Activated naive CD8-positive, alpha-beta T cell treated with anti-CD3 and anti-CD28 coated beads, Interleukin-2, amount 10 ng/mL, durations not matched to agents 7 days and 5 days (primary cell): ENCODE measurements at regions of chr20 and their contacts with region 1.

Region 1: DNA sequence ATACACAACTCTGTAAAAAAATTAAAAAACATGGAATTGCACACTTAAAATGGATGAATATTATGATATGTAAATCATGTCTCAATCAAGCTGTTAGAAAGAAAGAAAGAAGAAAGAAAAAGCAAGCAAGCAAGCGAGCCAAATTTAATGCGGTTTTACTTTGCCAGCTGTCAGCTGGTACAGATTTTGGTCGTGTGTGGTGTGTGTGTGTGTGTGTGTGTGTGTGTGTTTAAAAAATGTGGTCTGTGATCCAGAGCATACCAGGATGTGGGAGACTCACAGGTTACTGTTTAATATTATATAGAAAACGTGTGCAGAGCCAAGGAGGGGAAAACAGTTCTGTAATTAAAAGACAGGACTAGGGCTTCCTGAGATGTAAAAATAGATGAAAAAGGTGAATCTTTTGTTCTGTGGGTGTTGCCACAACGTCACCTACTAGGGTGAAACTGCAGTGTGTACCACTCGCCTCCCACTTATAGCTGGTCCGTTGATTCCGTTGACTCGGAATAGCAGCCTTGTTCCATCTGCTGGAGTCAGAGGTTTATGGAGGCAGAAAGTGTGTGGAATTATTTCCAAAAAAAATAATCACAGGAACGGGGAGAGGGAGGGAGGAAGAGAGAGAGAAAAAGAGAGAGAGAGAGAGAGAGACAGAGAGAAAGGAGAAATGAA is 197.7 kb downstream of the BCAS1 start:
- DNase-seq: no peak
- ATAC-seq: peak; percentile 54
- H3K4me3 Mint-ChIP-seq: peak overlapping the region; percentile 88
- H3K27ac Mint-ChIP-seq: peak overlapping the region; percentile 96
- H3K4me1 Mint-ChIP-seq: peaks cover 47% of the 10 kb centered on the region
- H3K27me3 Mint-ChIP-seq: no peaks in the 10 kb centered on the region

Region 2: DNA sequence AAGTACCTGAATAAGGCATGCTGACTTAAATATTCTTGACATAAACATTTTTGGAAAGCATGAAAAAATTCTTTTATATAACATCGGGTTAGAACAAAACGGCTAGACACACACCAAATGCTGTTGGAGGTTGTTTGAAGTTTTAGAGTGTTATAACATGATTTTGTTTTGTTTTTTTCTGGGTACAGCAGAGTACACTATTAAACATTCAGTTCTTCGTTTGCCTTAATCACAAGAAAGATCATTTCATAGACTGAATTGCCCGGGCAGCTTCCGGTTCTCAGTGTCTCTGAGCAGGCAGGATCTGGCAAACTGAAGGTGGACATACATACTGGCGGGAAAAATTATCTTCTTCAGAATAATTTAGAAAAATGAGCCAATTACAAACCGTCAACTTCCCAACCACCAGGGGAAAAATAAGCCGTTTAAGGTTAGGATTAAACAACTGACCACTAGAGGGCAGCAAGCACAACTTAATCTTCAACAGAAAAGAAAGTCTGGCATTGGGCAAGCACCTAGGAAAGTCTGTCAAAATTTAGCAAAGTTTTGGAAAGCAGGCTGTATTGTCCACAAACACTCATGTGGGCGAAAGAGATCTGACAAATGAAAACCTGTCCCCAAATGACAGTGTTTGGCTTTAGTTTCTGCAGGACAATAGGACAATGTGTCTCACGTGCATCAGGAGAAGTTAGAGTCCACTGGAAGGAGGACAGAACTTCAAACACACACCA is 294.0 kb before region 1 on chr20:
- POLR2A ChIA-PET with region 1: interaction called, 10 read pairs
- DNase-seq: no peak
- ATAC-seq: peak; percentile 21
- H3K4me3 Mint-ChIP-seq: peak overlapping the region; percentile 96
- H3K27ac Mint-ChIP-seq: peak overlapping the region; percentile 92
- H3K4me1 Mint-ChIP-seq: peaks cover 71% of the 10 kb centered on the region
- H3K27me3 Mint-ChIP-seq: no peaks in the 10 kb centered on the region

Region 3: DNA sequence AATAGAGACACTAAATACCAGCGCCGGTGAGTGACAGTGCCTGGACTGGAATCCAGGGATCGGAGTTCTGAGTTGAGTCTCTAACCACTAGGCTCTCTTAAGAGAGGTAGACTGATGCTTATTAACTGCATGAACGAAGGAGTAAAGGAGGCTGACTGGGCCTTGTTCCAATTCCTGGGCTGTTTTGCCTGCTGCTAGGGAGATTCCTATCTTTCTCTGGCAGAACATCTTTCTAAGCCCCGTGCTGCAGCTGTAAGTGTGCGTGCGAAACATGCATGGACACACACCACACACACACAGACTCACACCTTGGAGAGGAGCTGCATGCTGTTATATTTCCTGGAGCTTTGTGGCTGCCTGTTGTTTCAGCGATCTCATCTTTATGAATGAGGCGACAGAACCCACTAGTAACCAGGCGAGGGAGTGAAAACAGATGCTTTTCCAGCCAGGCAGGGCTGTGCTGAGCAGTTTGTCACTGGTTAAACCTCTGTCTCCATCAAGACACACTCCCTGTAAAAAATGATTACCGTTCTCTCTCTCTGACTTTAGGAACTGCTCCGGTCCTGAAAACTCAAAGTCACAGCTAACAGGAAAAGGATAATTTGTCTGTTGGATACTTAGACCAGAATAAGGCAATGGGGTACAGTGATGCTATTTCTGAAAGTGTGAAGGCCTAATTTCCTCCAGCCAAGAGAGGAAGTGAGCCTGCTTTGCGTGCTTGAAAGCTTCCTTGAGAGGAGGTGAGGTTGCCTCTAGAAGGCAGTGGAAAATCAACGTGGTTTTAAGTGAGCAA is 121.7 kb before region 1 on chr20:
- POLR2A ChIA-PET with region 1: interaction called, 20 read pairs
- DNase-seq: peak; percentile 58
- ATAC-seq: peak; percentile 66
- H3K4me3 Mint-ChIP-seq: peak overlapping the region; percentile 68
- H3K27ac Mint-ChIP-seq: peak overlapping the region; percentile 97
- H3K4me1 Mint-ChIP-seq: peaks cover 61% of the 10 kb centered on the region
- H3K27me3 Mint-ChIP-seq: no peaks in the 10 kb centered on the region

Region 4: DNA sequence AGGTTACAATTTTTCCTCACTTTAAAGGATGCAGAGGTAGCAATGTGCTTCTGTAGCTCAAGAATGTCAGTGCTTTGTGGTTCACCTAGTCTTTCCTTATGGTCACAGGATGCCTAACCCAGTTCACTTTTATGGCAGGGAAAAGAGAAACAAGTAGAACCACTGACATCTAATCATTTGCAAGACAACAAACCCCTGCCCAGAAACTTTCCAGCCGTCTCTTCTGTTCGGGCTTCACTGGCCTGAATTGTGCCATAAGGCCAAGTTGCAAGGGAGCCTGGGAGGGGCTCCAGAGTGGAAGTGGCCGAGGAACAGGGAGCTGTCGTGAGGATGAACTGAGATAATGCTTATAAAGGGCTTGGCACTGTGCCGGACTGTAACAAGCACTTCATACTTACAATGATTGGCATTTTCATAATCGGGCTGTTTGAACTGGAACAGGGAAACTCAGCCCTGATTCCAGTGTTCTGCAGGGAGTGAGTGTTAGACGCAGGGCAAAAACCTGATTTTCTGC is 14.9 kb before region 1 on chr20:
- POLR2A ChIA-PET with region 1: no interaction called
- DNase-seq: no peak
- ATAC-seq: peak; percentile 65
- H3K4me3 Mint-ChIP-seq: peak overlapping the region; percentile 60
- H3K27ac Mint-ChIP-seq: peak overlapping the region; percentile 71
- H3K4me1 Mint-ChIP-seq: peaks cover 31% of the 10 kb centered on the region
- H3K27me3 Mint-ChIP-seq: no peaks in the 10 kb centered on the region

Region 5: DNA sequence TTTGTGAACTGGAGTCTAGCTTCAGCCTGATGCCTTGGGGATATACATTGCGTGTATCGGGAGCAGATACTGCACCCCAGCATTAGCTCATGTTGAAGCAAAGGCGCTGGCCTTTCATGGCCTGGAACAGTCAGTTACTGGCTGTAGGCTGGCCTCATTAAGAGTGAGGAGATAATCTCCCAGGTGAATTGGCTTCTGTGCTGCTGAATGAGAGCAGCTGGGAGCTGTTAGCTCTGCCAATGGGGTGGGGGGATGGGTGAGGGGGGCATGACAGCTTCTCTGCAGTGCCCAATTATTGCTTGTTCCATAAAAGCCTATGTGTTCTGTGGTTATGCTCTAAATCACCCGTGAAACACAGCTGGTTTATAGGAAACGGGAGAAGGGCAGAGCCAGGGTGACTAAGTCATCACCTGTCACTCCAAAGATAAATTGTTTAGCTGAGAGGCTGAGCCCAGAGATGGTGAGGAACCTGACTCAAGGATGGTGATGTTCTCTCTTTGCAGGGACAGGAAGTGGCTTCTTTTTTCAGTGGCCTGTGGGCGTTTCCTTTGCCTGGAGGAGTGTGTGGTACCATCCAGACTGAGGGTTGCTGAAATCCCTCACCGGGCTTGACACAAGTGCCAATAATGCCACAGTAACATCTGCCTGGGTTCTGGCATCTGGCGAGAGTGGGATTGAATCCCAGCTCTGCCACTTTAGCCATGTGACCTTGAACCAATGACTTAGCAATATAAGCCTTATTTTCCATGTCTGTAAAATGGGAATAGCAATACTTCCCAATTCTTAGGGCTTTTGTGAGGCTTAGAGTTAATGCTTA is 26.9 kb after region 1 on chr20:
- POLR2A ChIA-PET with region 1: interaction called, 11 read pairs
- DNase-seq: peak; percentile 61
- ATAC-seq: peak; percentile 93
- H3K4me3 Mint-ChIP-seq: peak overlapping the region; percentile 58
- H3K27ac Mint-ChIP-seq: peak overlapping the region; percentile 94
- H3K4me1 Mint-ChIP-seq: peaks cover 52% of the 10 kb centered on the region
- H3K27me3 Mint-ChIP-seq: no peaks in the 10 kb centered on the region

Region 6: DNA sequence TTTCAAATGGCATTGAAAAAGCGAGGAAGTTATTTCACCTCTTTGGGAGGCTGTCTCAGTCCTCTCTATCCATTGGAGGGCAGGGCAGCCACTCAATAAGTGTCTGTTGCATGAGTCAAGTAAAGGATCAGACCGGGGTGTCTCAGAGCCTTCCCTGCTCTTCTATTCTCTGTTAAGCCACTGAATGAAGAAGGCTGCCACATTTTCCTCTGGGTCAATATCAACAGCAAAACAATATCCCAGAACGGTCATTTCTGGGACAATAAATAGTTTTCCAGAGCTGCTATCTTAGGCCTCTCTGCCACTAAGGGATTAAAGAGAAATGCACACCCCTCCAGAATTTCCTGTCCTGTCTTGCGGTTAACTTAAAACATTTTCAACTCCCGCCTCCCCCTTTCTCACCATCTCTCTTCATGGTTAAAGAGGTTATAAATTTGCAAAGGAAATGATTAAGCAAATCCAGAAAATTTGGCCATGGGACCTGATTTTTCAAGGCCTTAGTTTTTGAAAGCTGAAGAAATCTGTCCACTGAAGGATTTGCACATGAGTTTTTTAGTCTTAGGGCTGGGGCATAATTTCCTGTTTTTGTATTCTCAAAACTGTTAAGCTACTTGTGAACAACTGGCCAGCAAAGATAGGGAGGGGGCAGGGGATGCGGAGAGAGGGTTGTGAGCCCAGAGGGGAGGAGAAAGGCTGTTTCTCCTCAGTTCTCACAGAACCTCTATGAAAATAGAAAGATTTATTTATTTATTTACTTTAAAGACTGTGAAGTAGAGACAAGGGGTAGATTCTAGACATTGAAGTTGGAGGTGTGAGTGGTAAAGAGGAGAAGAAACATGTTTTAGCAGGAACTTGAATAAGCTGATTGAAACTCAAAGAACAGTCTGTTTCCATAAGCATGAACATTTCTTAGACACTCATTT is 62.0 kb after region 1 on chr20:
- POLR2A ChIA-PET with region 1: interaction called, 10 read pairs
- DNase-seq: no peak
- ATAC-seq: peak; percentile 67
- H3K4me3 Mint-ChIP-seq: peak overlapping the region; percentile 76
- H3K27ac Mint-ChIP-seq: peak overlapping the region; percentile 91
- H3K4me1 Mint-ChIP-seq: peaks cover 48% of the 10 kb centered on the region
- H3K27me3 Mint-ChIP-seq: no peaks in the 10 kb centered on the region